Body of pancreas (tissue), 4 donors: ENCODE measurements at regions of chr13 and their contacts with region 1.

Region 1: GRCh38 chr13:30107581-30107992 is 199.8 kb downstream of the KATNAL1 start:
- DNase-seq: no peak
- ATAC-seq: no peak
- H3K4me3 ChIP-seq: no peak overlapping the region
- H3K27ac ChIP-seq: peak overlapping the region in 1 of 4 donors; percentile 41
- H3K4me1 ChIP-seq: peaks cover 26% of the 10 kb centered on the region
- H3K27me3 ChIP-seq: no peaks in the 10 kb centered on the region
- CTCF ChIP-seq: no peak
- POLR2A ChIP-seq: no peak

Region 2: GRCh38 chr13:29835280-29836061 is 272.1 kb before region 1 on chr13:
- intact Hi-C with region 1: loop called (anchors 10 kb)
- DNase-seq: no peak
- ATAC-seq: no peak
- H3K4me3 ChIP-seq: no peak overlapping the region
- H3K27ac ChIP-seq: no peak overlapping the region
- H3K4me1 ChIP-seq: peaks cover 41% of the 10 kb centered on the region
- H3K27me3 ChIP-seq: no peaks in the 10 kb centered on the region
- CTCF ChIP-seq: no peak
- POLR2A ChIP-seq: no peak

Region 3: GRCh38 chr13:29923554-29924481 is 183.8 kb before region 1 on chr13:
- intact Hi-C with region 1: no loop called
- DNase-seq: peak; percentile 92 to 97 (median 96)
- ATAC-seq: peak; percentile 90
- H3K4me3 ChIP-seq: no peak overlapping the region
- H3K27ac ChIP-seq: peak overlapping the region; percentile 85 to 95 (median 92)
- H3K4me1 ChIP-seq: peaks cover 46% of the 10 kb centered on the region
- H3K27me3 ChIP-seq: no peaks in the 10 kb centered on the region
- CTCF ChIP-seq: peak; percentile 80 to 95 (median 89)
- POLR2A ChIP-seq: peak in 2 of 3 donors; percentile 66

Region 4: GRCh38 chr13:29935309-29935981 is 172.1 kb before region 1 on chr13:
- intact Hi-C with region 1: loop called (anchors 10 kb)
- DNase-seq: peak in 1 of 4 donors; percentile 45
- ATAC-seq: no peak
- H3K4me3 ChIP-seq: no peak overlapping the region
- H3K27ac ChIP-seq: peak overlapping the region in 3 of 4 donors; percentile 22 to 46 (median 33)
- H3K4me1 ChIP-seq: peaks cover 8% of the 10 kb centered on the region
- H3K27me3 ChIP-seq: no peaks in the 10 kb centered on the region
- CTCF ChIP-seq: no peak
- POLR2A ChIP-seq: no peak